GM18951 (cell line): ENCODE measurements at regions of chr2 and their contacts with region 1.

Region 1: GRCh38 chr2:195337597-195337996 is 319.4 kb upstream of the SLC39A10 start:
- POLR2A ChIP-seq: no peak

Region 2: GRCh38 chr2:195410074-195410671 is 72.6 kb after region 1 on chr2:
- in situ Hi-C with region 1: loop called (anchors 10 kb)
- POLR2A ChIP-seq: no peak

Region 3: GRCh38 chr2:196361606-196362326 is 1024.2 kb after region 1 on chr2:
- in situ Hi-C with region 1: no loop called
- POLR2A ChIP-seq: no peak